Activated CD4-positive, alpha-beta memory T cell treated with anti-CD3 and anti-CD28 coated beads for 36 hours (primary cell): ENCODE measurements at regions of chr11 and their contacts with region 1.

Region 1: DNA sequence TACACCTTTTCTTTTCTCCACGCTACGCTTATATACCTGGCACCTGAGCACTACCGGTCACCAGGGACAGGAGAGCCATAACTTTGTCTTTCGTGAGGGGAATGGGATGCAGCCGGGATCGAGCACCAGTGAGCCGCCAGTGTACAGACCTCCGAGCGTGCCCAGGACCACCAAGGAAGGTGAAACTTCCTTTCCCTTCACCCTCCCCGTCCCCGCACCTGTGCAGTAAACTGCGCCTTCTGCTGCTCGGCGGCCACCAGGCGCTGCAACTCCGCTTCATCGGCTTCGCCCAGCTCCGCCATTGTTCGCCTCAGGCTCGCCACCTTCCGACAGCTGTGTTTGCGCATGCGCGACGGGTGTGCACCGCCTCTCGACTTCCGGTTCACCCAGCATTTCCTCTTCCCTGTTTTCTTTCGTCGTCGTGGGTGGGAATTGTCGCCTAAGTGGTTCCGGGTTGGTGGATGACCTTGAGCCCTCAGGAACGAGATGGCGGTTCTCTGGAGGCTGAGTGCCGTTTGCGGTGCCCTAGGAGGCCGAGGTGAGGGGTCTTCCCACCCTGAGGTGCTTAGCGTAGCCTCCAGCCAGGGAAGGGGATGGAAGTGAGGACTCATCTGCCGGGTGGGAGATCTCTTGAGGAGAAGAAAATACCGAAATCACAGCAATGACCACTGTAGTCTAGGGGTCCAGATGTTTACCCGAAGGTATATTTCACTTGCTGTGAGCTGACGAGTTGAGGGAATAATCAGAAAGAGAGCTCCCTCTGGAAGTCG is at the starts of genes SDHD and TIMM8B:
- DNase-seq: peak; percentile 97
- H3K4me3 Mint-ChIP-seq: peak within 1 kb of the TSS; percentile 92
- H3K27ac Mint-ChIP-seq: peak within 1 kb of the TSS; percentile 92
- H3K4me1 Mint-ChIP-seq: peaks cover 63% of the 10 kb centered on the region
- H3K27me3 Mint-ChIP-seq: peaks cover 2% of the 10 kb centered on the region
- total RNA-seq, gene SDHD: 72.7 to 91.6 TPM
- total RNA-seq, gene TIMM8B: 36.5 to 38.4 TPM

Region 2: GRCh38 chr11:111870886-111871692 is 215.5 kb before region 1 on chr11 and contains the start of gene ALG9:
- CTCF ChIA-PET with region 1: interaction called, 3 read pairs
- POLR2A ChIA-PET with region 1: interaction called, 3 read pairs
- intact Hi-C with region 1: loop called (anchors 2 kb)
- DNase-seq: peak; percentile 92
- H3K4me3 Mint-ChIP-seq: peak within 1 kb of the TSS; percentile 92
- H3K27ac Mint-ChIP-seq: peak within 1 kb of the TSS; percentile 86
- H3K4me1 Mint-ChIP-seq: peaks cover 24% of the 10 kb centered on the region
- H3K27me3 Mint-ChIP-seq: no peaks in the 10 kb centered on the region
- total RNA-seq, gene ALG9: 23.6 to 26.7 TPM

Region 3: DNA sequence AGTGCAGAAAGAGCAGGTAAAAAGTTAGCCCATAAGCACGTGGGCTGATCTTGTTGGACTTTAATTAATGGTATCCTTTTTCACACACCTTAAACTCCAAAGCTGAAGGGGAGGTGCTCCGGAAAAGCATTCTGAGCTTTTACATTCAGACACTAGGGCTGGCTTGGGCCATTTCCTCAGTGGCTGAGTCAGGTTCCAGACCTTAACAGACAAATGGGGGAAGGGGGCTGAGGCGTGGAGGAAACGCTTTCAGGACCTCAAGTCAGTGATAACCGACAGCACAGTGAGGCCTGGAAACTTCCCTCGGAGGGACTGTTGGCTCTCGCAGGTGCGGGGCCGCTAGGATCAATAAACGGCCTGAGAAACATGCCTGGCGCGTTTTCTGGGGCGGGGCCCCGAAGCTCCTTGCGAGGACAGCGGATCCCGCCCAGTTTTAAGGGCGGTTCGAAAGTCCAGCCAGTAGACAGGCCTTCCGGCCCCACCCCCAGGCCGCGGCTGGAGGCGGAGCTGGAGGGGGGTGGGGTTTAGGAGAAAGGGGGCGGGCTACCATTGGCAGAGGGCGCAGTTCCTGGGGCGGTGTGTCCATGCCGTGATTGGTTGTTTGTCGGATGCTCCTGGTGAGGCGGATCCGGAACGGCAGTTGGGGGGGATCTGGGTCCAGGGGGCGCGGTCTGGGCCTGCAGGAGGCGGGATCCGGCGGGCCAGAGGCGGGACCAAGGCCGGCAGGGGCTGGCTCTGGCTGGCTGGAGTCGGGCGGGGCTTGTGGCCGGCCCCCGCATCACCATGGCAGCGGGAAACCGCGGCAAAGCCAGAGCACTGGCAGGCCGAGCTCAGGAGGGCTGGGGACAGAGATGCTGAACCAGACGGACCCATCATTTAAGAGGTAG is 159.9 kb before region 1 on chr11:
- CTCF ChIA-PET with region 1: interaction called, 4 read pairs
- POLR2A ChIA-PET with region 1: no interaction called
- intact Hi-C with region 1: loop called (anchors 1 kb)
- DNase-seq: peak; percentile 98
- H3K4me3 Mint-ChIP-seq: peak overlapping the region; percentile 84
- H3K27ac Mint-ChIP-seq: peak overlapping the region; percentile 86
- H3K4me1 Mint-ChIP-seq: peaks cover 13% of the 10 kb centered on the region
- H3K27me3 Mint-ChIP-seq: no peaks in the 10 kb centered on the region

Region 4: GRCh38 chr11:112024773-112025678 is 61.6 kb before region 1 on chr11 and contains the start of gene DLAT:
- CTCF ChIA-PET with region 1: no interaction called
- POLR2A ChIA-PET with region 1: no interaction called
- intact Hi-C with region 1: loop called (anchors 2 kb)
- DNase-seq: peak; percentile 92
- H3K4me3 Mint-ChIP-seq: peak within 1 kb of the TSS; percentile 98
- H3K27ac Mint-ChIP-seq: peak within 1 kb of the TSS; percentile 98
- H3K4me1 Mint-ChIP-seq: peaks cover 21% of the 10 kb centered on the region
- H3K27me3 Mint-ChIP-seq: no peaks in the 10 kb centered on the region
- total RNA-seq, gene DLAT: 36.4 to 39.0 TPM

Region 5: DNA sequence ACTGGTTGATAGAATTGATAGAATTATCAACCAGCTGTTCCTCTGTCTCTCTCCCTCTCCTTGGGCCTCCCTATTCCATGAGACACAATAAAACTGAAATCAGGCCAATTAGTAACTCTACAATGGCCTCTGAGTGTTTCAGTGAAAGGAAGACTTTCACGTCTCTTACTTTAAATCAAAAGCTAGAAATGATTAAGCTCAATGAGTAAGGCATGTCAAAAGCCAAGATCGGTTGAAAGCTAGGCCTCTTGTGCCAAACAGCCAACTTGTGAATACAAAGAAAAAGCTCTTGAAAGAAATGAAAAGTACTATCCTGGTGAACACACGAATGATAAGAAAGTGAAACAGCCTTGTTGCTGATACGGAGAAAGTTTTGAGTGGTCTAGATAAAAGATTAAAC is 29.4 kb before region 1 on chr11:
- CTCF ChIA-PET with region 1: interaction called, 3 read pairs
- POLR2A ChIA-PET with region 1: interaction called, 9 read pairs
- intact Hi-C with region 1: loop called (anchors 1 kb)
- DNase-seq: peak; percentile 29
- H3K4me3 Mint-ChIP-seq: peak overlapping the region; percentile 33
- H3K27ac Mint-ChIP-seq: peak overlapping the region; percentile 69
- H3K4me1 Mint-ChIP-seq: peaks cover 23% of the 10 kb centered on the region
- H3K27me3 Mint-ChIP-seq: no peaks in the 10 kb centered on the region

Region 6: DNA sequence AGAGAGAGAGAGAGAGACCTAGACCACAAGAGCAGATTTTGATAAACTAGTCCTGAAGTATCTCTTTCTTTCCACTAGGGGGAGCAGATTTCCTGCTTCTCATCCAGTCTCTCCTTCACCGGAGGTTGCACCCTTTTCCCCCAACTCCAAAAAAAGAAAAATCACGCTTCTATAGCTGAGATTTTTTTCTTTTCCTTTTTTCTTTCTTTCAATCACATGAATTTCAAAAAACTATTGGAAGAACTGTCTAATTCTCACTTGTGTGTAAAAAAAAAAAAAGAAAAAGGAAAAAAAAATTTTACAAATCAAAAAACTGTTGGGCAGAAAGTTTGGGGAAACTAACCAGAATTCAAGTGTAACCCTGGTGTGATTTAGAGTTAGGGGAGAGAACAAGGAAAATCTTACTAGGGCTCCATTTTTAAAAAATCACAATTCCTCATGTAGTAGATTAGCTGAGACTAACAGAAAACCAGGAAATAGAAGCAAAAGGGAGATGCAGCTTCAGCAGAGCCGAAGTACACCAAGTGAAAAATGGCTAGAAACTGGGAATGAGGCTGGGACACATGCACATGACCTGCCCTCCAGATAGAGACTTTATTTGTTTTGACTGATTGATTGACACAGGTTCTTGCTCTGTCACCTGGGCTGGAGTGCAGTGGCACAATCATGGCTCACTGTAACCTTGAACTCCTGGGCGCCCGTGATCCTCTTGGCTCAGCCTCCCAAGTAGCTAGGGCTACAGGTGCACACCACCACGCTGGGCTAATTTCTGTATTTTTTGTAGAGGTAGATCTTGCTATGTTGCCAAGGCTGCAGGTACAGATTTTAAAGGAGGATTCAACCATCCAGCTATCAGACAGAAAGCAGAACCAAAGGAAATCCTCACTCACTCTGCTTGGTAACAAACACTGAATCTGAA is 27.2 kb after region 1 on chr11:
- CTCF ChIA-PET with region 1: interaction called, 16 read pairs
- POLR2A ChIA-PET with region 1: no interaction called
- intact Hi-C with region 1: no loop called
- DNase-seq: no peak
- H3K4me3 Mint-ChIP-seq: no peak overlapping the region
- H3K27ac Mint-ChIP-seq: no peak overlapping the region
- H3K4me1 Mint-ChIP-seq: peaks cover 2% of the 10 kb centered on the region
- H3K27me3 Mint-ChIP-seq: no peaks in the 10 kb centered on the region